AG04450 (cell line): ENCODE measurements at regions of chr4 and their contacts with region 1.

Region 1: GRCh38 chr4:69060651-69061308 is 35.5 kb upstream of the UGT2B7 start:
- DNase-seq: no peak
- H3K4me3 ChIP-seq: no peak overlapping the region
- H3K27ac ChIP-seq: no peak overlapping the region
- H3K27me3 ChIP-seq: no peaks in the 10 kb centered on the region
- CTCF ChIP-seq: peak; percentile 16; the same call in 1 of the 2 replicates

Region 2: DNA sequence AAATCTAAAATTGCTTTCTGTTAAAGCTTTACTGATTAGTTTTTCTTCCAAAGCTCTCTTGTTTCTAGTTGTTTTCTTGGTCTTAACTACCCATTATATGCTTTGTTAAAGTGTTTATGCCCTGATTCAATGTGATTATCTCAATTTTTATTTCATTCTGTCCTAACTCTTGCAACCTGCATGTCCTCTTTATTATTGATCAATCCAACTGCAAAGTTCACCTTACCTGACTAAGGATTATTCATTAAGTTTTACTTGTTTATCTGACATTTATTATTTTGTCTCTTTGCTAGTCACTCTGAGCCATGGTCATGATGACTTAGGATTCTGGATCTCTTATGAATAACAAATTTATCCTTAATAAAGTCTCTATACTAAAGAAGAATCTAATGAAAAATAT is 229.1 kb before region 1 on chr4:
- CTCF ChIA-PET with region 1: no interaction called
- POLR2A ChIA-PET with region 1: no interaction called
- DNase-seq: no peak
- H3K4me3 ChIP-seq: no peak overlapping the region
- H3K27ac ChIP-seq: no peak overlapping the region
- H3K27me3 ChIP-seq: no peaks in the 10 kb centered on the region
- CTCF ChIP-seq: no peak

Region 3: DNA sequence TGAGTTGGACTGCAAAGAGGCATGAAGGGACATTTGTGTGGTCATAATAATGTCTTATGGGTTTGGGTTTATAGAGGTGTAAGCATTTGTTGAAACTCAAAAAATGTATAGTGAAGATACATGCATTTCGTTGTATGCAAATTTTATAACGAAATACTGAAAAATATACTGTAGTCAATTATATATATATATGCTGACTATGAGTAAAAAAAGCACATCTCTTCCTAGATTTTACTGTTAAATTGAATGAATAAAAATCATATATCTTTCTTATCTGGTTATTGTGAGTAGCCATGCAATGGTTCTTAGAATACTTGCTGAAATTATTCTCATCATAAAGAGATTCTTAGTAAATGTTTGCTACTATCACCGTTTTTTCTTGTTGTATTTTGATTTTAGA is 210.5 kb before region 1 on chr4:
- CTCF ChIA-PET with region 1: no interaction called
- POLR2A ChIA-PET with region 1: no interaction called
- DNase-seq: no peak
- H3K4me3 ChIP-seq: no peak overlapping the region
- H3K27ac ChIP-seq: no peak overlapping the region
- H3K27me3 ChIP-seq: no peaks in the 10 kb centered on the region
- CTCF ChIP-seq: no peak

Region 4: GRCh38 chr4:69133993-69134392 is 73.2 kb after region 1 on chr4:
- CTCF ChIA-PET with region 1: no interaction called
- POLR2A ChIA-PET with region 1: no interaction called
- DNase-seq: no peak
- H3K4me3 ChIP-seq: no peak overlapping the region
- H3K27ac ChIP-seq: no peak overlapping the region
- H3K27me3 ChIP-seq: no peaks in the 10 kb centered on the region
- CTCF ChIP-seq: no peak

Region 5: DNA sequence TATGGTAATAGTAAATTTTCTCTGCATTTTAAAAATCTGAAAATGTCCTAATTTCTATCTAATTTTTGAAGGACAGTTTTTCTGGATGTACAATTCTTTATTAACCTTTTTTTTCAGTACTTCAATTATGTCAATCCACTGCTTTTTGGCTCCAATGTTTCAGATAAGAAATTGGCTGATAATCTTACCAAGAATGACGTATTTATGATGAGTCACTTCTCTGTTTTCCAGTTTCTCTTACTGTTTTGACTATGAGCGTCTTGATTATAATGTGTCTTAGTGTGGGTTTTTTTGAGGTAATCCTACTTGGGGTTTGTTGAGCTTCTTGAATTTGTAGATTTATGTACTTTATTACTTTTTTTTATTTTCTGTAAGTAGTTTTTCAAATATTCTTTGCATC is 106.5 kb after region 1 on chr4:
- CTCF ChIA-PET with region 1: interaction called, 16 read pairs
- POLR2A ChIA-PET with region 1: no interaction called
- DNase-seq: no peak
- H3K4me3 ChIP-seq: no peak overlapping the region
- H3K27ac ChIP-seq: no peak overlapping the region
- H3K27me3 ChIP-seq: no peaks in the 10 kb centered on the region
- CTCF ChIP-seq: no peak